ENCODE measurements at regions of chr5 and their contacts with region 1.

Region 1: DNA sequence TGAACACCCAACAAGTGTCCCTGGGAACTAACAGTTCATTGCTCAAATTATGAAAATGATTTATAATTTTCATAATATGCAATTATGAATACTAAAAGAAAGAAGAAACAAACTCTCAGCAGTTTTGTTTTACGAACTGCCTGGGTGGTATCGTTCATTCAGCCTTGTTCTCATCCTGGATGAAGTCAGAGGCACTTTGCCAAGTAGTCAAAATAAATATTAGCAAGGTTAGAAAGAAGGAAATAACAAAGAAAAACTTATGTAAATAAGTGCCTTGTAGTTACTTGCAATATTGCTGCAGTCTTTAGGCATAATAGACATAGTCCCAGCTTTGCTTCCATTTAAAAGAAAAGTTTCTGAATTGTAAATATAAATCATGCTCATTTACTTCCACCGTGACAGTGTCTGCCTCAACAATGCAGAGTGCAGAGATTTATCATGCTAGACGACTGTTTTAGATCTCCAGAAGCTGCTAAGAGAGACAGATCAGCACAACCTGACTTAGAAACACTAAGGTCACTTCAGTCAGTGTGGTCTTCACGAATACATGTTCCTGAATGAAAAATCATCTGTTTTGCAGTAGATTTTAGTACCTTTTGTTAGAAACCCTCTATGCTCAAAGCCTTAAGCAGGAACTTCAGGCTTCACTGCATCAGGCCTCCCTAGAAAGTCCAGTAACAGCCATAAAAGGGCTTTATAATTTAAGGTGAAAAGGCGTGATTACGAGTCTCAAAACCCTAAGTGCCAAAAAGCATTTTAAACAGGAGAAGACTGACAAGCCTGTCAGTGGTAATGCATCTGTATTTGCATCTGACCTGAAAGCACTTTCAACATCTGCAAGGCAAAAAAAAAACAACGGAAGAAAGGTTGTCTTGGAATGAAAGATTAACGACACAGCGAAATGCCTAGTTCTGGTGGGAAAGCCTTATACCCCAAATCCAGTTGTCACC is 92.1 kb downstream of the TMEM167A start:
- DNase-seq: no peak
- H3K4me3 ChIP-seq: no peak overlapping the region
- H3K27ac ChIP-seq: no peak overlapping the region
- H3K4me1 ChIP-seq: peaks cover 5% of the 10 kb centered on the region
- H3K27me3 ChIP-seq: no peaks in the 10 kb centered on the region
- CTCF ChIP-seq: no peak

Region 2: DNA sequence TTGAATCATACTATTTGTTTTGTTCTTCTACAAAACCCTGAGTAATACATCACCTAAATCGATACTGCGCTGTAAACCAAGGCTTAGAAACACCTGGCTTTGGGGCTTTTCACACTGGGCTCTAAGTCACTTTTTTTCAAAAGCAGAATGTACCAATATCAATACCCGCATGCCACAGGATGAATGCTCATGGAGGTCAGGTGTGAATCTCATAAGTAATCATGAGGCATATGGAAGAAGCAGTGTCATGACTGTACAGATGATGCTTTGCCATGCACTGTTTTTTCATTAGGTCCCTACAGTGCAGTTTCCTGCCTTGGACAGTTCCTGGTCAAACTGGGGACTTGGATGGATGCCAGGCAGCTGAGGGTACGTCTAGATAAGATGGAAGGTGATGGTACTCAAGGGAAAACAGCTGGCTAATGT is 1062.2 kb before region 1 on chr5:
- CTCF ChIA-PET with region 1: no interaction called
- dilution Hi-C with region 1: no loop called
- in situ Hi-C with region 1: no loop called
- intact Hi-C with region 1: no loop called
- DNase-seq: no peak
- H3K4me3 ChIP-seq: no peak overlapping the region
- H3K27ac ChIP-seq: no peak overlapping the region
- H3K4me1 ChIP-seq: no peaks in the 10 kb centered on the region
- H3K27me3 ChIP-seq: no peaks in the 10 kb centered on the region
- CTCF ChIP-seq: no peak

Region 3: DNA sequence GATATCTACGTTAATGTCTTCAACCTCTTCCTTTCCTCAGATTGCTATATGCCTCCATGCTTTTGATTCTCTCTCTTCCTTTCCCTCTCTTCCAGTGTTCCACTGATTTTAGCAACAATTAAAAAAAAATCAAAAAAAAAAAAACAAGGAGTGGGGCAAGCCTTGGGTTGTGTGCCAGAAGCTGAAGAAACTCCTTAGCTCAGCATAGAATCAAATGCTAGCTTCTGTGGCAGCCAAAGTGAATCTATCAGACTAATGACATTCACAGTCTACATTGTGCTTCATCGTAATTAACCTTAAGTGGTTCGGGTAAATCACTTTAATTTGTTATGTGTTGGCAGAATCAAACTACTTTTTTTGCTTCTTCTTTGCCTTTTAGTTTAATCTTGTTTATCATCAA is 145.2 kb before region 1 on chr5:
- CTCF ChIA-PET with region 1: no interaction called
- dilution Hi-C with region 1: no loop called
- in situ Hi-C with region 1: no loop called
- intact Hi-C with region 1: no loop called
- DNase-seq: no peak
- H3K4me3 ChIP-seq: no peak overlapping the region
- H3K27ac ChIP-seq: no peak overlapping the region
- H3K4me1 ChIP-seq: no peaks in the 10 kb centered on the region
- H3K27me3 ChIP-seq: no peaks in the 10 kb centered on the region
- CTCF ChIP-seq: no peak

Region 4: DNA sequence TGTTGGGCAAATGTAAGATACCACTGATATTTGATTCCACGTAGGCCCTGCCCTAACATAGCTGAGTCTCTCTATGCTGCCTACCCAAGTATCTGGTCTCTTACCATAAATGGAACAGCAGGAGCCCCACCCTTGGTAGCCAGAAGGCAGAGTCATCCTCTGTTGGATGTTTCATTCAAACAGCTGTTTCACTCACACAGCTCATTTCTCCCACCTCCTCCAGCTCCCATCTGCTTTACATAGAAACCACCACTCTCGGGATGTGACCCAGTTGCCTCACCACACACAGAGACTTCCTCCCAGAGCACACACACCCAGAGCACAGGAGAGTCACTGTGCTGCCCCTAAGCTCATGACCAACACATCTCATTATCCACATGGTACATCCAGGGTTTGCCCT is 73.2 kb before region 1 on chr5:
- CTCF ChIA-PET with region 1: no interaction called
- dilution Hi-C with region 1: loop called (anchors 5 kb)
- in situ Hi-C with region 1: no loop called
- intact Hi-C with region 1: no loop called
- DNase-seq: peak; percentile 35
- H3K4me3 ChIP-seq: no peak overlapping the region
- H3K27ac ChIP-seq: no peak overlapping the region
- H3K4me1 ChIP-seq: no peaks in the 10 kb centered on the region
- H3K27me3 ChIP-seq: no peaks in the 10 kb centered on the region
- CTCF ChIP-seq: no peak